ENCODE measurements at regions of chr1 and their contacts with region 1.

Region 1: DNA sequence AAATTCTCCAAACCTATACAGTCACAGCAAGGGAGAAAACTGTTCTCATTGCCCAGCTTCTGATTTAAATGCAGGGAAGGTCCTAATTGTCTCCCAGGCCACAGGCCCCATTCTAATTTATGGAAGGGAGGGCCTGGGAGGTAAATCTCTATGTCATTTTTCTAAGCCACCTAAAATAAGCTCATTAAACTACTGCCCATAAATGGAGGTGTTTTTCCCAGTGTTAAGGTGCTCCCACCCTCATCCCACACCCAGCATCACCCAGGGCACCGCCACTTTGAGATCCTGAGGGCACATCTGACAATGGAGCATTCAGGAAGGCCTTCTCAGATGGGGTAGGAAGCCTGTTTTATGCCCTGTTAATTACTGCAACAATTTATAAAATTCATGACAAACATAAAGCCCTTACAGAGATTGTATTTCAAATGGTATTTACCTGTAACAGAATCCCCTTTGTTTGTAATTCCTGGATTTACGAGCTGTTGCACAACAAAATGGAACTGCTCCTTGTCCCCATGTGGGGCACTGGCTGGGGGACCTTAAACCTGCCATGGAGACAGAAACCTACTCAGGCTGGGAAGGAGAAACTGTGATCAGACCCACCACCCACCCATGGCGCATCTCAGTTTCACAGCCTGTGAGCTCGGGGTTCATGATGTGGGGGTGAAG is 319.5 kb upstream of the USP24 start:
- DNase-seq: no peak
- H3K4me3 ChIP-seq: no peak overlapping the region
- CTCF ChIP-seq: no peak

Region 2: GRCh38 chr1:55204997-55205396 is 329.6 kb before region 1 on chr1:
- in situ Hi-C with region 1: no loop called
- DNase-seq: no peak
- H3K4me3 ChIP-seq: no peak overlapping the region
- CTCF ChIP-seq: no peak

Region 3: GRCh38 chr1:55483523-55483922 is 51.1 kb before region 1 on chr1:
- in situ Hi-C with region 1: loop called (anchors 5 kb)
- DNase-seq: no peak
- H3K4me3 ChIP-seq: no peak overlapping the region
- CTCF ChIP-seq: no peak

Measured in astrocyte of the cerebellum (primary cell).